GM12878 (cell line): ENCODE measurements at regions of chr10 and their contacts with region 1.

Region 1: DNA sequence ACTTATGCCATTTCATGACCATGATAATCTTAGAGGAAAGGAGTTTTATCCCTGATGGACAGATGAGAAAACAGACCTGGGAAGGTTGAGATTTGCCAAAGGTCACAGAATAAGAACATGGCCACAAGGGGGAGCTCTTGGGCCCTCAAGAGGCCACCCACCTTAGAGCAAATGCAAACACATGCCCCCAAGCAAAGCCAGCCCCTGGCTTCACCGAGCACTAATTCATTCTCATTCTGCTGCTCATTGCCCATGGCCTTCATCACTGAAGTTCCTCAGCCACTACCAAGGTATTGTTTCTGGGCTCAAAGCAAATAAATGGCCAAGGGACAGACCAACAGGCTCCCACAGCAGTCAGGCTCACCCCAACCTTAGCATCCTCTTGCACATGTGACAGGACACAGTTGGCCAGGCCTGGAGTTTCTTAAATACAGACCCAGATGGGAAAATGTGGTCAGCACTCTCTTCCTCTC is 44.2 kb downstream of the PDLIM1 start:
- DNase-seq: no peak
- ATAC-seq: peak; percentile 81
- H3K4me3 ChIP-seq: no peak overlapping the region
- H3K27ac ChIP-seq: peak overlapping the region; percentile 78
- H3K4me1 ChIP-seq: peaks cover 47% of the 10 kb centered on the region
- H3K27me3 ChIP-seq: no peaks in the 10 kb centered on the region
- CTCF ChIP-seq: peak; percentile 77 to 85 (median 78)
- EP300 ChIP-seq: no peak
- POLR2A ChIP-seq: no peak
- RAD21 ChIP-seq: peak; percentile 77

Region 2: DNA sequence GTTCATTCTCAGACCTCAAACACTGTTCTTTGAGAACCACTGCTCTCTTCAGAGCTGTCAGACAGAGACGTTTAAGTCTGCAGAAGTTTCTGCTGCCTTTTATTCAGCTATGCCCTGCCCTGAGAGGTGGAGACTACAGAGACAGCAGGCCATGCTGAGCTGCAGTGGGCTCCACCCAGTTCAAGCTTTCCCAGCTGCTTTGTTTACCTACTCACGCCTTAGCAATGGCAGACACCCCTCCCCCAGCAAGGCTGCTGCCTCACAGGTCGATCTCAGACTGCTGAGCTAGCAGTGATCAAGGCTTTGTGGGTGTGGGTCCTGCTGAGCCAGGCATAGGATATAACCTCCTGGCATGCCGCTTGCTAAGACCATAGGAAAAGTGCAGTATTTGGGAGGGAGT is 388.6 kb before region 1 on chr10:
- CTCF ChIA-PET with region 1: no interaction called
- POLR2A ChIA-PET with region 1: no interaction called
- RAD21 ChIA-PET with region 1: no interaction called
- SMC1A ChIA-PET with region 1: no interaction called
- in situ Hi-C with region 1: no loop called
- intact Hi-C with region 1: no loop called
- DNase-seq: no peak
- ATAC-seq: no peak
- H3K4me3 ChIP-seq: no peak overlapping the region
- H3K27ac ChIP-seq: no peak overlapping the region
- H3K4me1 ChIP-seq: no peaks in the 10 kb centered on the region
- H3K27me3 ChIP-seq: no peaks in the 10 kb centered on the region
- CTCF ChIP-seq: no peak
- EP300 ChIP-seq: no peak
- POLR2A ChIP-seq: no peak
- RAD21 ChIP-seq: no peak

Region 3: DNA sequence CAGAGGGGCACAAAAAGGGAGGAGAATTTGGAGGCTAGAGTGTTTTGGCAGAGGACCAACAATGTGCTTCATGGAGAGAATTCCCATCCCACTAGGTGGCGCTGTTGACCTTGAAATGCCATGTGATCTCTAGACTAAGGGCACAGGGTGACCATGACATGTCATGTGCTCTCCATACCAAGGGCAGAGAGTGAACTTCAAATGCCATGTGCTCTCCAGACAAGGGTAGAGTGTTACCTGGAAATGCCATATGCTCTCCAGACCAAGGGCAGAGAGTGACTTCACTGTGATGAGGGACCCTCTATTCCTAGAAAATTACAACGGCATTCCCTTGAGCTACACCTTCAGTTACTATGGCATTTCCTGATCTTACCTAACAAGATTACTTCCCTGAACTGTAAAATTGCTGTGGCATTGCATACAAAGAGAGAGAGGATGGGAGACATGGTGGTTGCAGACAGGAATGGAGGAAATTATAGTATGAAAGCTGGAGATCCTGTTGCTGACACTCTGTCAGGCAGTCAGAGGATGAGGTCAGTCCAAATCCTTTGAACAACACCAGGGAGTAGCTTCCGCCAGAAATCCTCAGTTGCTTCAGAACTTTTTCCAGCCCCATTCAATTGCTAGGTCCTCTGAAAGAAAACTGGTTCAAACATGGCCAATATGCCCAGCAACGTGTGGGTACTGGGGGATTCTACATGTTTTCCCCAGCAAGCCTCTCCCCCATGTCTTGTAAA is 113.4 kb before region 1 on chr10:
- CTCF ChIA-PET with region 1: interaction called, 7 read pairs
- POLR2A ChIA-PET with region 1: no interaction called
- RAD21 ChIA-PET with region 1: interaction called, 6 read pairs
- SMC1A ChIA-PET with region 1: interaction called, 5 read pairs
- in situ Hi-C with region 1: loop called (anchors 5 kb)
- intact Hi-C with region 1: loop called (anchors 1 kb)
- DNase-seq: peak; percentile 45
- ATAC-seq: peak; percentile 99
- H3K4me3 ChIP-seq: no peak overlapping the region
- H3K27ac ChIP-seq: no peak overlapping the region
- H3K4me1 ChIP-seq: no peaks in the 10 kb centered on the region
- H3K27me3 ChIP-seq: no peaks in the 10 kb centered on the region
- CTCF ChIP-seq: peak; percentile 71 to 83 (median 79)
- EP300 ChIP-seq: no peak
- POLR2A ChIP-seq: no peak
- RAD21 ChIP-seq: peak; percentile 86

Region 4: GRCh38 chr10:95236068-95236903 is 10.3 kb before region 1 on chr10:
- CTCF ChIA-PET with region 1: interaction called, 38 read pairs
- POLR2A ChIA-PET with region 1: interaction called, 3 read pairs
- RAD21 ChIA-PET with region 1: interaction called, 11 read pairs
- SMC1A ChIA-PET with region 1: interaction called, 7 read pairs
- in situ Hi-C with region 1: no loop called
- intact Hi-C with region 1: loop called (anchors 1 kb)
- DNase-seq: peak; percentile 90
- ATAC-seq: peak; percentile 96
- H3K4me3 ChIP-seq: no peak overlapping the region; the same call in 1 of the 2 replicates
- H3K27ac ChIP-seq: peak overlapping the region; percentile 78
- H3K4me1 ChIP-seq: peaks cover 21% of the 10 kb centered on the region
- H3K27me3 ChIP-seq: no peaks in the 10 kb centered on the region
- CTCF ChIP-seq: no peak
- EP300 ChIP-seq: peak; percentile 93
- POLR2A ChIP-seq: peak; percentile 39; the same call in 1 of the 2 replicates
- RAD21 ChIP-seq: no peak

Region 5: DNA sequence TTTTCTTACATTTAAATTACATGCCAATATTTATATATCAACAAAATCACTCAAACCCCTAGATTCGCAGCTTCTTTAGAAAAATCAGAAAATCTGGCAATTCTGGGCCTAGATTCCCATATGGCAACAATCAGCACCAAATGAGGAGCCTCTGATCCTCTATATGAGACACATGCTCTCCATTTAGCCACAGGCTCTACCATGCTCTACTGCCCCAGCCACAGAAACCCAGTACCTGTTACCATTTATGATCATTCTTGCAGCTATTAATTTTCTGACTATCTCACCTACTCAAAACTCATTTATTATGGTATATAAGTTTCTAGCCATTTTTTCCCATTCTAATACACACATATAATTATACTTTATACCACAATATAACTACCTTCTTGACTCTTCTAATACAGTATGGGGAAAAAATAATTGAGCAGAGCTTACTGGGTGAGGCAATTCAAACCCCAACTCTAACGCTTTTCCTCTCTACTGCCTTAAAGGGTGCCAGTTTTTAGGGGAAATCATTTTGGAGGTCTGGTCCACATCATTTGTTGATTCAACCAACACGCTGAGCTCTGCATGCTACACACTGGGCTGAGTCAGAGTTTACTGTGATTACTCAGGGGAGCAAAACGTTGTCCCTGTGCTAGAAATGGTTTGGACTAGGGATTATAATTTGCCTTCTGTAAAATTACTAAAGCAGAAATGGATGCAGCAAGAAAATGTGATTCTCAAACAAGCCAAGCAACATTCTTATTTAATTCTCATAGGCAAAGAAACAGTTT is 32.6 kb after region 1 on chr10:
- CTCF ChIA-PET with region 1: interaction called, 176 read pairs
- POLR2A ChIA-PET with region 1: no interaction called
- RAD21 ChIA-PET with region 1: interaction called, 9 read pairs
- SMC1A ChIA-PET with region 1: interaction called, 23 read pairs
- in situ Hi-C with region 1: no loop called
- intact Hi-C with region 1: no loop called
- DNase-seq: no peak
- ATAC-seq: peak; percentile 59
- H3K4me3 ChIP-seq: peak overlapping the region; percentile 29; the same call in 1 of the 2 replicates
- H3K27ac ChIP-seq: peak overlapping the region; percentile 6; the same call in 1 of the 2 replicates
- H3K4me1 ChIP-seq: peaks cover 30% of the 10 kb centered on the region
- H3K27me3 ChIP-seq: no peaks in the 10 kb centered on the region
- CTCF ChIP-seq: no peak
- EP300 ChIP-seq: no peak
- POLR2A ChIP-seq: no peak
- RAD21 ChIP-seq: no peak

Region 6: GRCh38 chr10:95350219-95350829 is 103.7 kb after region 1 on chr10:
- CTCF ChIA-PET with region 1: interaction called, 11 read pairs
- POLR2A ChIA-PET with region 1: no interaction called
- RAD21 ChIA-PET with region 1: interaction called, 14 read pairs
- SMC1A ChIA-PET with region 1: interaction called, 9 read pairs
- in situ Hi-C with region 1: no loop called
- intact Hi-C with region 1: no loop called
- DNase-seq: no peak
- ATAC-seq: no peak
- H3K4me3 ChIP-seq: no peak overlapping the region
- H3K27ac ChIP-seq: no peak overlapping the region
- H3K4me1 ChIP-seq: peaks cover 8% of the 10 kb centered on the region; the same call in 1 of the 2 replicates
- H3K27me3 ChIP-seq: no peaks in the 10 kb centered on the region
- CTCF ChIP-seq: no peak
- EP300 ChIP-seq: no peak
- POLR2A ChIP-seq: no peak
- RAD21 ChIP-seq: no peak